ENCODE measurements at regions of chr12 and their contacts with region 1.

Region 1: DNA sequence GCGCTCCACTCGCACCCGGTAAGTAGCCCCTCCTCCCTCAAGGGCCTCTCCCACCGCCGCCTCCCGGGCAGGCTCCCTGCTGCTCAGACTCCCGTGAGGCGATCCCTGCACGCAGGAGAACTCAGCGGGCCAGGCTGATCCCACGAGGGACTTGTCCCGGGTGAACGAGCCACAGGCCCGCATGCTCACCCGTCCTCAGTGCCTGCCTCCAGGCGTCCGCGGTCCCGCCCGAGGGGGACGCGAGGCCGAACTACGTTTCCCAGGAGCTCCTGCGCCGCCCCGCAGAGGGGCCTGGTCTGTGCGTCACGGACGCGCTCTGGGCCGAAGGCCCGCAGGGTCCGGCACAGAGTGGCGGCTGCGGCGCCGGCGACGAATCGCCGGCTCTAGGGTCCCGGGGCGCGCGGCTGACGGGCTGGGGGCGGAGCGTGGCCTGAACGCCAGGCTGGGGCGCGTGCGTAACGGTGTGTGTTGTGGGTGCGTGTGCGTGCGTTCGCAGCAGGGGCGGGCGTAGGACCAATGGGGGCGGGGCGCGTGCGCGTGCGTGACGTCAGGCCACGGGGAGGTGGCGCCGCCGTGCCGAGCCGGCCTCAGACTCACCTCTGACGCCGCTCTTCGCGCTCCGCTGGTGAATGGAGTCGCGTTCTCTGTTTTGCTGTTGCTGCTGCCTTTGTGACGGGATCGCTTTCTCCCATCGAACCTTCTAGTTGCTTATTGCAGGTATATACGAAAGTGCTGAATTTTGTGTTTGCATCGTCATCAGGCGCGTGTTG is at the starts of genes ZNF10 and ZNF891:
- DNase-seq: peak; percentile 79 to 96
- H3K4me3 ChIP-seq: peak within 1 kb of the TSS; percentile 98
- H3K27ac ChIP-seq: peak within 1 kb of the TSS; percentile 80
- H3K4me1 ChIP-seq: peaks cover 9% of the 10 kb centered on the region; the same call in 1 of the 2 replicates
- H3K27me3 ChIP-seq: no peaks in the 10 kb centered on the region
- CTCF ChIP-seq: no peak
- total RNA-seq, gene ZNF10: 7.3 and 9.5 TPM in 2 replicates
- total RNA-seq, gene ZNF891: 2.4 and 3.2 TPM in 2 replicates

Region 2: DNA sequence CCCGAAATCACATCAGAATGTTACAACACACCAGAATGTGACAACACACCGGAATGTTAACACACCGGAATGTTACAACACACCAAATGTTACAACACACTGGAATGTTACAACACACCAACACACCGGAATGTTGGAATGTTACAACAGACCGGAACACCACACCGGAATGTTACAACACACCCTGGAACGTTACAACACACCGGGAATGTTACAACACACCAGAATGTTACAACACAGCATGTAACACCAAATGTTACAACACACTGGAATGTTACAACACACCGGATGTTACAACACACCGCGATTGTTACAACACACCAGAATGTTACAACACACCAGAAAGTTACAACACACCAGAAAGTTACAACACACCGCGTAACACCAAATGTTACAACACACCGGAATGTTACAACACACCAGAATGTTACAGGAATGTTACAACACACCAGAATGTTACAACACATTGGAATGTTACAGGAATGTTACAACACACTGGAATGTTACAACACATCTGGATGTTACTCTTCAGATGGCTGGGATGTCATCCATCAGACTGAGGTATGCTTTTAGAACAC is 263.9 kb before region 1 on chr12:
- CTCF ChIA-PET with region 1: no interaction called
- POLR2A ChIA-PET with region 1: no interaction called
- intact Hi-C with region 1: no loop called
- DNase-seq: no peak
- H3K4me3 ChIP-seq: no peak overlapping the region
- H3K27ac ChIP-seq: no peak overlapping the region
- H3K4me1 ChIP-seq: no peaks in the 10 kb centered on the region
- H3K27me3 ChIP-seq: no peaks in the 10 kb centered on the region
- CTCF ChIP-seq: no peak

Region 3: GRCh38 chr12:133080368-133081158 is 49.7 kb before region 1 on chr12 and contains the start of gene ZNF140:
- CTCF ChIA-PET with region 1: no interaction called
- POLR2A ChIA-PET with region 1: no interaction called
- intact Hi-C with region 1: loop called (anchors 1 kb)
- DNase-seq: peak; percentile 87 to 92
- H3K4me3 ChIP-seq: peak within 1 kb of the TSS; percentile 85
- H3K27ac ChIP-seq: peak within 1 kb of the TSS; percentile 96
- H3K4me1 ChIP-seq: peaks cover 7% of the 10 kb centered on the region; the same call in 1 of the 2 replicates
- H3K27me3 ChIP-seq: no peaks in the 10 kb centered on the region
- CTCF ChIP-seq: peak; percentile 42; the same call in 1 of the 2 replicates
- total RNA-seq, gene ZNF140: 10.2 and 11.1 TPM in 2 replicates

Region 4: DNA sequence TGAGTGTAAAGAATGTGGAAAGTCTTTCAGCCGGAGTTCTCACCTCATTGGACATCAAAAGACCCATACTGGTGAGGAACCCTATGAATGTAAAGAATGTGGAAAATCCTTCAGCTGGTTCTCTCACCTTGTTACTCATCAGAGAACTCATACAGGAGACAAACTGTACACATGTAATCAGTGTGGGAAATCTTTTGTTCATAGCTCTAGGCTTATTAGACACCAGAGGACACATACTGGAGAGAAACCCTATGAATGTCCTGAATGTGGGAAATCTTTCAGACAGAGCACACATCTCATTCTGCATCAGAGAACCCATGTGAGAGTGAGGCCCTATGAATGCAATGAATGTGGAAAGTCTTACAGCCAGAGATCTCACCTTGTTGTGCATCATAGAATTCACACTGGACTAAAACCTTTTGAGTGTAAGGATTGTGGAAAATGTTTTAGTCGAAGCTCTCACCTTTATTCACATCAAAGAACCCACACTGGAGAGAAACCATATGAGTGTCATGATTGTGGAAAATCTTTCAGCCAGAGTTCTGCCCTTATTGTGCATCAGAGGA is 26.0 kb after region 1 on chr12:
- CTCF ChIA-PET with region 1: no interaction called
- POLR2A ChIA-PET with region 1: interaction called, 16 read pairs
- intact Hi-C with region 1: no loop called
- DNase-seq: no peak
- H3K4me3 ChIP-seq: no peak overlapping the region
- H3K27ac ChIP-seq: no peak overlapping the region
- H3K4me1 ChIP-seq: no peaks in the 10 kb centered on the region
- H3K27me3 ChIP-seq: no peaks in the 10 kb centered on the region
- CTCF ChIP-seq: no peak

Measured in PC-9 (cell line).